Kidney (tissue), 22 donors: ENCODE measurements at regions of chr9 and their contacts with region 1.

Region 1: DNA sequence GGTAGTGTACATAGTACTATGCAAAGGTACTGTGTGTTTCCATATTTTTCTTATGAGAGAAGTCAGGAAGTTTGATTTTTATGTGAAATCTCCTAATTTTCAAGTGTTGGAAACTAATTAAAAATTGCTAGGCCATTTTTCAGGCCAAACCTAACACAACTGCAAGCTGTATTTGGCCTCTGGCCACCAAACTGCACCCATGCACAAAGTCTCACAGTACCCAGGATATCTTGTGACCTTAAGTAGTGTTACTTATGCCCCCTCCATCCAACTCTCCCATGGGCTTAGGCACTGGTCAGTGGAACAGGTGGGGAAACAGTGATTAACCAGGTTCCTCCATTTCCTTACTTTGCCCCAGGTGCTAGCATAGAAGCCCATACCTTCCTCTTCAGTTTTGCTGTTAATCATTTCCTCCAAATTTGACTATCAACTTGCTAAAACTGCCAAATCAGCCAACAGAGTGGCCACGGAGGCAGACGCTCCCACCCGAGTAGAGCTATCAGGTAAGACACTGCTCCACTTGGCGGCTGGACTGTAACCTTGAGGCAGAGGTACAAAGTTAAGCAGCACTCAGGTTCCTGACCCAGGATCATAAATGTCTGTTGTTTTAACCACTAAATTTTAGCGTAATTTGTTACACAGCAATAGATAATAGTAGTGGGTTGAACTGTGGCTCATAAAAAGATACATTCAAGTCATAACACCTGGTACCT is 19.5 kb upstream of the KIF27 start:
- DNase-seq: no peak
- H3K4me3 ChIP-seq: no peak overlapping the region
- H3K27ac ChIP-seq: no peak overlapping the region
- H3K4me1 ChIP-seq: peaks cover 0 to 8% (median 2%) of the 10 kb centered on the region in 3 donors
- H3K27me3 ChIP-seq: no peaks in the 10 kb centered on the region
- CTCF ChIP-seq: no peak

Region 2: GRCh38 chr9:83979812-83980394 is 39.2 kb after region 1 on chr9 and contains the start of gene HNRNPK:
- intact Hi-C with region 1: no loop called
- DNase-seq: peak; percentile 98 to 100 (median 99)
- H3K4me3 ChIP-seq: peak within 1 kb of the TSS; percentile 95 to 100 (median 100)
- H3K27ac ChIP-seq: peak within 1 kb of the TSS; percentile 100
- H3K4me1 ChIP-seq: peaks cover 5 to 14% (median 5%) of the 10 kb centered on the region in 3 donors
- H3K27me3 ChIP-seq: no peaks in the 10 kb centered on the region
- CTCF ChIP-seq: no peak
- total RNA-seq, gene HNRNPK: 483 TPM

Region 3: DNA sequence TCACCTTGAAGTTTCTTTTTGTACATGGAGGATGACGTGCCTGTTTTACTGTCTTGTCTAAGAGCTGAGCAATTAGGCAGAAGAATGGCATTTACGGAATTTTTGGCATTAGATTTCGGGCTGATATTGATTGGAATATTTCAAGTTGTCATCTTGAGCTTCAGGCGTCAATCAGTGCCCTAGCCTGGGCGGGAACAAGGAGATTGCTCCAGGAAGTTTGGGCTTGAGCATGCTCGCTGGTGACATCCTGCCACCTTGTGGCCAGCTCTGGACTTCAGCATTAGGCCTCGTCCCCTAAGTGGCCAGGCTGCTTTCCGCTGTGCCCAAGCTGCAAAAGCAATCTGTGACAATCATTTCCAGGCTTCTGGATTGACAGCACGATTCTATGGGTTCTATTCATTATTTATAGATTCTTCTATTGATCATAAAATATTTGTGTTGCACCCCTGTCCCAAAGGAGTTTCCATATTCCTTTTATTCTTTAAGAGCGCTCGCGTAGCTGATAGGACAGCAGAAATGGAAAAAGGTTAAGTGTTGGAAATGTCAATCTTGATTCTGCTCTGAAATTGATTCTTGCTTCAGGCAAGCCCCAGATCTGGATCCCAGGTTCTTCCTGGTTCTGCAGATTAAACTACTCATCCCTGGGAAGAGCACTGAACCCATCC is 320.5 kb after region 1 on chr9:
- intact Hi-C with region 1: loop called (anchors 5 kb)
- DNase-seq: peak; percentile 82 to 91 (median 87)
- H3K4me3 ChIP-seq: peak overlapping the region in 2 of 3 donors; percentile 55
- H3K27ac ChIP-seq: no peak overlapping the region
- H3K4me1 ChIP-seq: no peaks in the 10 kb centered on the region
- H3K27me3 ChIP-seq: no peaks in the 10 kb centered on the region
- CTCF ChIP-seq: peak; percentile 86